ENCODE measurements at regions of chr1 and their contacts with region 1.

Region 1: GRCh38 chr1:10510520-10511493 is 36.1 kb downstream of the PEX14 start:
- H3K4me3 Mint-ChIP-seq: no peak overlapping the region
- H3K27ac Mint-ChIP-seq: no peak overlapping the region
- H3K4me1 Mint-ChIP-seq: peaks cover 30% of the 10 kb centered on the region
- H3K27me3 Mint-ChIP-seq: no peaks in the 10 kb centered on the region

Region 2: GRCh38 chr1:9861360-9861759 is 649.4 kb before region 1 on chr1:
- intact Hi-C with region 1: no loop called
- H3K4me3 Mint-ChIP-seq: no peak overlapping the region
- H3K27ac Mint-ChIP-seq: no peak overlapping the region
- H3K4me1 Mint-ChIP-seq: peaks cover 39% of the 10 kb centered on the region
- H3K27me3 Mint-ChIP-seq: no peaks in the 10 kb centered on the region

Region 3: GRCh38 chr1:10540277-10541005 is 29.6 kb after region 1 on chr1:
- intact Hi-C with region 1: no loop called
- H3K4me3 Mint-ChIP-seq: no peak overlapping the region
- H3K27ac Mint-ChIP-seq: no peak overlapping the region
- H3K4me1 Mint-ChIP-seq: no peaks in the 10 kb centered on the region
- H3K27me3 Mint-ChIP-seq: no peaks in the 10 kb centered on the region

Region 4: GRCh38 chr1:10694633-10695627 is 184.1 kb after region 1 on chr1:
- intact Hi-C with region 1: loop called (anchors 5 kb)
- H3K4me3 Mint-ChIP-seq: peak overlapping the region; percentile 68
- H3K27ac Mint-ChIP-seq: no peak overlapping the region
- H3K4me1 Mint-ChIP-seq: peaks cover 25% of the 10 kb centered on the region
- H3K27me3 Mint-ChIP-seq: peaks cover 34% of the 10 kb centered on the region

Region 5: DNA sequence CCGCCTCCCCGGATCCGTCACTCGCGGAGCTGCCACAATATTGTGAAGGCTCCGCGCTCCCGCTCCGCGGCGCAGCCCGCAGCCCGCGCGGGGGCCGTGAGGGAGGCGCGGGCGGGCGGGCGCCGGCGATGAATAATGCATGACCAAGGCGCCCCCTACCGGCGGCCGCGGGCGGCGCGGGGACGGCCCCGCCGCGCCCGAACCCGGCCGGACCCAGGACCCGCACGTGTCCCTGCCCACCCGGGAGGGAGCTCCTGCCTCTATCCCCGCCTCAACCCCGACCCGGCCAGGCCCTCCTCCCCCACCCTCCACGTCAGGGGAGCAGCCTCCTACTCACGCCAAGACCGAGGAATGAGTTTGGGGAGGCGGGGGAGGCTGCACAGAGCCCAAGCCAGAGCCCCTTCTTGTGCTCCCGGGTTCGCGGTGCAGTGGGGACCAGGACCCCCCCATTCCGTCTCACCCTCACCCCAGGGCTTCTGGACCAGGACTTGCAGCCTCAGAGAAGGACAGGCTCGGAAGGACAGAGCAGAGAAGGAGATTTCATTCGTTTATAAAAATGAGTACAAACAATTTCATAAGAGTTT is 356.4 kb after region 1 on chr1:
- intact Hi-C with region 1: loop called (anchors 1 kb)
- H3K4me3 Mint-ChIP-seq: no peak overlapping the region
- H3K27ac Mint-ChIP-seq: no peak overlapping the region
- H3K4me1 Mint-ChIP-seq: peaks cover 5% of the 10 kb centered on the region
- H3K27me3 Mint-ChIP-seq: peaks cover 75% of the 10 kb centered on the region

Region 6: DNA sequence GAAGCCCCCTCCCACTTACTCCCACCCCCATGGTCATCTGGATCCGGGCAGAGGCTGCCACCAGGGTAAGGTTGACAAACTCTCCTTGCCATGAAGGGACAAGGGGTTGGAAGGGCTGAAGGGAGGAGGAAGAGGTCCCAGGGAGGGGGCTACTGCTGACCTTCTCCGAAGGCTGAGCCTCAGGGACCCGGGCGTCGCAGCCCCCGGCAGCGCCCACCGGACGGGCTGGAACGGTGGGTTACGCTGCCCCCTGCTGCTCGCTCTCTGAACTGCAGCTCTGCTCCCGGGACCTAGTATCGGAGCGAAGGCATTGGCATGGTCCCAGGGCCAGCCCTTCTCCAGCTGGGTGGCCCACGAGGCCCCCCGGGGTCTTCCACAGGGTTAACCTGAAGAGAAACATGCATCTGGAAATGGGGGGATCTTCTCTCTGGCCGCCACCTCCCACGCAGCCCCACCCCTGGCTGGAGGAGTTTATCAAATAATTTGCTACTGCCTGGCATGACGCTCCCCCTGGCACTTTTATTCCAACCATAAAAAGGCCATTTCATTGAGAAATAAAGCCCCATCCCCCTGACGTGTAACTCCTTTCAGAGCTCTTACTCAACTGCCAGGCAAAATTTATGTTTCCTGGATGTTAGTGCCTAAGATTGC is 431.2 kb after region 1 on chr1:
- intact Hi-C with region 1: loop called (anchors 1 kb)
- H3K4me3 Mint-ChIP-seq: no peak overlapping the region
- H3K27ac Mint-ChIP-seq: no peak overlapping the region
- H3K4me1 Mint-ChIP-seq: peaks cover 39% of the 10 kb centered on the region
- H3K27me3 Mint-ChIP-seq: peaks cover 53% of the 10 kb centered on the region

Measured in dendritic cell treated with granulocyte-macrophage colony-stimulating factor and Interleukin-4, amounts not matched to agents 40 ng/mL and 50 ng/mL, for 4 days (primary cell).